HCT116 (cell line): ENCODE measurements at regions of chr7 and their contacts with region 1.

Region 1: DNA sequence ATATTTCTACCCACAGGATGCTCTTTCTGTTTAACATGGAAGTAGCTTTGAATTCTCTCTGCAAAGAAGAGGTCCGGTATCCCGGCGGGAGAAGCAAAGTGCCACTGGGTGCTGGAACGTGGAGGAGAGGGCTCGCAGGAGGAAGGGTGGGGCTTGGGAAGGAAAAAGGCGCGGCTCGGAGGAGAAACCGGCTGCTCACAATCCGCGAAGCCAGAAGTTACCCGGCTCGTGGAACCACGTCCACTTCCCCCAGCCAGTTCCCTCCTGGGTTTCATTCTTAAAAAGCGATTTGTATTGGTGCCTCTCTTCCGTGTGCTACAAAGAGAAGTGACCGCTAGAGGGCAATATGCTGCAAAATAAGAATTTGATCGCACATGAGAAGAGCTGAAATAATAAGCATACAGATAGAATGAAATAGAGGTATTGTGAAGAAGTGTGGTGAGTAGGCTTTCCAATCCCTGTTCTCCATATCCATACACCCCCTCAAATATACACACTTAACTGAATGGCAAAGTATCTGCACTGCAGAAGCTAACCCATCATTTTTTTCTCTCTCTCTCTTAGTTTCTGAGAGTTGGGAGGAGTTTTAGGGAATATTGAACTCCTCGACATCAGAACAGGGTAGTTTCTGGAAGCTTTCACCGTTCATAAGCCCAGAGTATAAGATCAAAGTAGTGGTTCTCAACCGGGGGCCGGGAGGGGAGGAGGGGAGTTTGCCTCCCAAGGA is 31.1 kb downstream of the TRIL start:
- DNase-seq: peak; percentile 73
- ATAC-seq: peak; percentile 92
- H3K4me3 ChIP-seq: peak overlapping the region; percentile 38 to 54
- H3K27ac ChIP-seq: no peak overlapping the region
- H3K4me1 ChIP-seq: peaks cover 4 to 10% of the 10 kb centered on the region in 2 experiments; a peak in 3 of 4 replicates
- H3K27me3 ChIP-seq: no peaks in the 10 kb centered on the region
- CTCF ChIP-seq: peak; percentile 77 to 91 (median 83)
- POLR2A ChIP-seq: no peak
- RAD21 ChIP-seq: peak; percentile 86

Region 2: DNA sequence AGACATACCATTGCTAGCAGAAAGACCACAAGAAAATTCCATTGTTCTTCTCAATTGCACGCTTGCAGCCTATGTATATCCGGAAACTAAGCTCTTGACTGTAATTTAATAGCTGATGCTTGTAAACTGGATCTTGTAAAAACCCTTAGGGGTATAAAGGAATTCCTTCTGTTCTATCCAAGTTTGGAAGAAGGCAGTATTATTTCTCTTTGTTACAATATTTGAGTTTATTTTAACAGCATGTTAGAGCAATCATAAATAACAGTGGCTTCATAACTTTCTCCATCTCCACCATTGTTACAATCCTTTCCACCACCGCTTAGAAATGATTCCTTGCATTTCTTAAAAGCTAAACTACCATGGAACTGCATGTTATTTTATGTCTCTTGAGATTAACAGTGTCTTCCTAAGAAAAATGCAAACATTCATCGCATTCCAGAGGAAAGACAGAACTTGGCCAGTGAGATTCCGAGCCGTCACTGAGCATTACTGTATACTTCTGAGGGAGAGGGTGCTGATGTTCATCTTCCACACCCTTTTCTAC is 61.4 kb before region 1 on chr7:
- CTCF ChIA-PET with region 1: no interaction called
- POLR2A ChIA-PET with region 1: no interaction called
- RAD21 ChIA-PET with region 1: no interaction called
- intact Hi-C with region 1: no loop called
- DNase-seq: no peak
- ATAC-seq: no peak
- H3K4me3 ChIP-seq: no peak overlapping the region
- H3K27ac ChIP-seq: no peak overlapping the region
- H3K4me1 ChIP-seq: no peaks in the 10 kb centered on the region
- H3K27me3 ChIP-seq: no peaks in the 10 kb centered on the region; the same call in 1 of the 2 replicates
- CTCF ChIP-seq: no peak
- POLR2A ChIP-seq: no peak
- RAD21 ChIP-seq: no peak

Region 3: GRCh38 chr7:29091715-29092114 is 164.7 kb after region 1 on chr7:
- CTCF ChIA-PET with region 1: interaction called, 10 read pairs
- POLR2A ChIA-PET with region 1: no interaction called
- RAD21 ChIA-PET with region 1: no interaction called
- intact Hi-C with region 1: no loop called
- DNase-seq: no peak
- ATAC-seq: 0 out of 2 replicates have a peak, but pooled peaks have one; percentile 40
- H3K4me3 ChIP-seq: no peak overlapping the region
- H3K27ac ChIP-seq: no peak overlapping the region
- H3K4me1 ChIP-seq: no peaks in the 10 kb centered on the region
- H3K27me3 ChIP-seq: no peaks in the 10 kb centered on the region
- CTCF ChIP-seq: peak in 2 of 3 experiments; percentile 7 to 14; a peak in 1 of 6 replicates
- POLR2A ChIP-seq: no peak
- RAD21 ChIP-seq: no peak

Region 4: GRCh38 chr7:29105752-29106668 is 179.0 kb after region 1 on chr7:
- CTCF ChIA-PET with region 1: interaction called, 356 read pairs
- POLR2A ChIA-PET with region 1: interaction called, 8 read pairs
- RAD21 ChIA-PET with region 1: interaction called, 14 to 17 read pairs
- intact Hi-C with region 1: loop called (anchors 1 kb)
- DNase-seq: peak; percentile 39
- ATAC-seq: peak; percentile 90
- H3K4me3 ChIP-seq: no peak overlapping the region
- H3K27ac ChIP-seq: no peak overlapping the region
- H3K4me1 ChIP-seq: no peaks in the 10 kb centered on the region
- H3K27me3 ChIP-seq: no peaks in the 10 kb centered on the region
- CTCF ChIP-seq: peak; percentile 75 to 85 (median 79); a peak in 5 of 6 replicates
- POLR2A ChIP-seq: no peak
- RAD21 ChIP-seq: peak; percentile 83

Region 5: DNA sequence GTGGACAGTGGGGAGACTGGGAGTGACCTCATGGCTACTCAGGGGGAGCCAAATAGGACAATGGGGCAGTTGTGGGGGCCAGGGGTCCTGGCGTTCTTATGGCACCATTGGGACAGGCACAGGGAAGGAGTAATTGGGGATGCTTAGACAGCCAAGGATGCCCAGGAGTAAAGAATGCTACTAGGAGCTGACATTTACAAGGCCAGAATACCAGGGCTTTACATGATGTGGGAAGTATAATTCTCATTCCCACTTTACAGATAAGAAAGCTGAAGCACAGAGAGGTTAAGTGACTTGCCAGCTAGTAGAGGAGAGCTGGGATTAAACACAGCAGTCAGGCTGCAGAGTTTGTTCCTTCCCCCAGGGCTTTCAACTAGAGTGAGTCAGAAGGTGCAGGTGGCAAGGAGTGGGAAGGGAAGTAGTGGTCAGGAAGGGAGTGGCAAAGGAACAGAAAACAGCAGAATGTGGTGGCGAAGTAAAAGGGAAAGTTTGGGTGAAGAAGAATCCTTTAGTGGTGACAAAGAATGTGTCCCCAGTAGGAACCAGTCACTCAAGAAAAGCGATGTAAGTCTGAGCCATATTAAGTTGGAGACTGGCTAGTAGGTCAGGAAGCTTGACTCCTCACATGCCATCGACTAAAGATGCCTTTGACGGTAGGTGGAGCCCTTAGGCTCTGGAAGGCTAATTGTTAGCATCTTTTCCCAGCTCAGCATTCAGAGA is 186.5 kb after region 1 on chr7:
- CTCF ChIA-PET with region 1: interaction called, 356 read pairs
- POLR2A ChIA-PET with region 1: interaction called, 3 read pairs
- RAD21 ChIA-PET with region 1: interaction called in 1 of 2 experiments, 5 read pairs
- intact Hi-C with region 1: no loop called
- DNase-seq: peak; percentile 36
- ATAC-seq: peak; percentile 89
- H3K4me3 ChIP-seq: no peak overlapping the region
- H3K27ac ChIP-seq: no peak overlapping the region
- H3K4me1 ChIP-seq: peaks cover 3 to 20% of the 10 kb centered on the region in 2 experiments; a peak in 3 of 4 replicates
- H3K27me3 ChIP-seq: no peaks in the 10 kb centered on the region
- CTCF ChIP-seq: peak; percentile 46 to 56 (median 54); a peak in 5 of 6 replicates
- POLR2A ChIP-seq: no peak
- RAD21 ChIP-seq: peak; percentile 74

Region 6: GRCh38 chr7:29345600-29345999 is 418.6 kb after region 1 on chr7:
- CTCF ChIA-PET with region 1: interaction called, 22 read pairs
- POLR2A ChIA-PET with region 1: no interaction called
- RAD21 ChIA-PET with region 1: interaction called in 1 of 2 experiments, 8 read pairs
- intact Hi-C with region 1: loop called (anchors 2 kb)
- DNase-seq: peak; percentile 10
- ATAC-seq: peak; percentile 65
- H3K4me3 ChIP-seq: no peak overlapping the region
- H3K27ac ChIP-seq: no peak overlapping the region
- H3K4me1 ChIP-seq: peaks cover 0 to 8% of the 10 kb centered on the region in 2 experiments; a peak in 1 of 4 replicates
- H3K27me3 ChIP-seq: no peaks in the 10 kb centered on the region
- CTCF ChIP-seq: peak; percentile 38 to 44 (median 43); a peak in 4 of 6 replicates
- POLR2A ChIP-seq: no peak
- RAD21 ChIP-seq: peak; percentile 70

Region 7: DNA sequence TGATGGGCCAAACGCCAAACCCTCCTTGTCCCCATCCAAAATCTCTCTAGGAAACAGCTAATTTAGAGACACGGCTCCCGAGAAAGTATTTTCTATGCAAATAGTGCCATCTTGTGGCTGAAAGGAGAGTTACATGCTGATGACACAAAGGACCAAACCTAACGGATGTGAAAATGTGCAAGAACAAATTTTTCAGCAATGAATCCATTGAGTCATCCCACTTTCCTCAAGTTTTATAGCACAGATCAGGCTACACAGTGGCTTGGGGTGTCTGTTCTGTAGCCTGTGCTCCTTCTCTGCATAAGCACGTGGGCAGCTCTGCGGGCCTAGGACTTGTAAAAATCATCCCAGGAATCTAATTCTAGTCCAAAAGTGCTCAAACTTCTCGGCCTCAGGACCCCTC is 481.8 kb after region 1 on chr7:
- CTCF ChIA-PET with region 1: interaction called, 76 read pairs
- POLR2A ChIA-PET with region 1: interaction called, 3 read pairs
- RAD21 ChIA-PET with region 1: interaction called, 4 to 12 read pairs
- intact Hi-C with region 1: loop called (anchors 1 kb)
- DNase-seq: peak; percentile 34
- ATAC-seq: peak; percentile 80
- H3K4me3 ChIP-seq: no peak overlapping the region
- H3K27ac ChIP-seq: no peak overlapping the region
- H3K4me1 ChIP-seq: no peaks in the 10 kb centered on the region
- H3K27me3 ChIP-seq: no peaks in the 10 kb centered on the region; the same call in 1 of the 2 replicates
- CTCF ChIP-seq: peak; percentile 67 to 87 (median 79)
- POLR2A ChIP-seq: no peak
- RAD21 ChIP-seq: peak; percentile 94